AG04450 (cell line): ENCODE measurements at regions of chr5 and their contacts with region 1.

Region 1: GRCh38 chr5:39080597-39081204 is 6.5 kb upstream of the RICTOR start:
- DNase-seq: peak; percentile 47
- H3K4me3 ChIP-seq: no peak overlapping the region
- H3K27ac ChIP-seq: no peak overlapping the region
- H3K27me3 ChIP-seq: no peaks in the 10 kb centered on the region
- CTCF ChIP-seq: peak; percentile 84

Region 2: DNA sequence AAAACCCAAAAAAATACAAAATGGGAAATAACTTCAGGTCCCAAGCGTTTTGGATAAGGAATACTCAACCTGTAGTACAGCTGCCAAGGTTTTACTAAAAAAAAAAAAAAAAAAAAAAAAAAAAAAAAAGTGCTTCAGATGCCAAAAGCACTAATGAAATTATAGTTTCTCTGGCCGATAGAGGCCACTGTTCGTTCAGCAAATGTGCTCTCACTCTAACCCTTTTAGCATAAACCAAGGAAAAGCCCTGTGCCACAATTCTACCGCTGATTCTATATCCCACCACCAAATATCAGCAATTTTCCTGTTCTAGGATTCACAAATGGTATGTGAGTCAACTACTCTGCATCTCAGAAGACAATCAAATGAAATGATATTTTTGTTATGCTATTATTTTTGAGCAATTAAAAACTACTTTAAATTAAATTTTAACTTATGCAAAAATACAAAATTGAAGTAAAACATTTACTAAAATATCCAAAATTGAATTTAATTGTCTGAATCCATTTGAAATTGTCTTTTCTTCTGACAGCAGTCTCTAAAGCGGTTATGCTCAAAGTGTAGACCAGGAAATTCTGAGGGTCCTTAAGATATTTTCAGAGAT is 86.3 kb before region 1 on chr5:
- CTCF ChIA-PET with region 1: interaction called, 14 read pairs
- POLR2A ChIA-PET with region 1: no interaction called
- DNase-seq: peak; percentile 24
- H3K4me3 ChIP-seq: no peak overlapping the region
- H3K27ac ChIP-seq: no peak overlapping the region
- H3K27me3 ChIP-seq: no peaks in the 10 kb centered on the region
- CTCF ChIP-seq: peak; percentile 57

Region 3: DNA sequence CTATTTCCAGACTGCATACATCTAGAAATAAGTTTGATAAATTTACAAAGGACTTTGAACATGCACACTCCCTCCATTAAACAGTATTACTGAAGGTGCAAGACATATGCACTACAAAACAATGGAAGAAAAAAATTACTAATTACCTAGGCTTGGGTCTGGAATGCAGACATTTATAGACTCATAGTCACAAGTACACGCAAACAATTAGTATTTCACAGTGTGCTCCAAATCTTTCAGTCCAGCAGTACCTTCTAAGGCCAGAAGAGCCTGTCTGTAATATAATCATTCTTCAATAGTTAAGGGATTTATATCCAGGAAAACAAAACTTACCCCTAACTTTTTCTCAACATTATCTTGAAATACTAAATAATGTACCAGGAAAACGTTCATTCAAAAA is 17.7 kb before region 1 on chr5:
- CTCF ChIA-PET with region 1: interaction called, 14 read pairs
- POLR2A ChIA-PET with region 1: no interaction called
- DNase-seq: no peak
- H3K4me3 ChIP-seq: no peak overlapping the region
- H3K27ac ChIP-seq: no peak overlapping the region
- H3K27me3 ChIP-seq: no peaks in the 10 kb centered on the region
- CTCF ChIP-seq: no peak

Region 4: GRCh38 chr5:39100851-39101396 is 20.2 kb after region 1 on chr5:
- CTCF ChIA-PET with region 1: interaction called, 55 read pairs
- POLR2A ChIA-PET with region 1: interaction called, 3 read pairs
- DNase-seq: peak; percentile 95
- H3K4me3 ChIP-seq: peak overlapping the region; percentile 5; the same call in 1 of the 2 replicates
- H3K27ac ChIP-seq: peak overlapping the region; percentile 96
- H3K27me3 ChIP-seq: no peaks in the 10 kb centered on the region
- CTCF ChIP-seq: no peak

Region 5: DNA sequence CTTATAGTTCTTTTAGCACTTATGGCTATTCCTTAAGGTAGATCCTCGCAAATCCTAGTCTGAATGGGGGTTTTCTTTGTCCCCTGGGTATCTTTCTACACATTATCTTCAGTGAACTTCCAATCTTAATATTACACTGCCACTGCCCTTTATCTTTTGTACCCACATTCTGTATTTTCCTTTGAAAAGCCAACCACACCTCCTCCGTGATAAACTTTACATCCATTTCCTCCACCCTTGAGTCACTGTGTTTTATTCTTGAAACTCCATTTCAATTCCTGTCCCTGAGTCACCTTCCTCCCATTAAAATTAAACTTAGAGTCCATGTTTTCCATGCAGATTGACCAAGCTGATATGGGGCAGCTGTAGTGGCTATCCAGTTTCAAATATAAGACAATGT is 36.7 kb after region 1 on chr5:
- CTCF ChIA-PET with region 1: interaction called, 17 read pairs
- POLR2A ChIA-PET with region 1: no interaction called
- DNase-seq: no peak
- H3K4me3 ChIP-seq: no peak overlapping the region
- H3K27ac ChIP-seq: no peak overlapping the region
- H3K27me3 ChIP-seq: no peaks in the 10 kb centered on the region
- CTCF ChIP-seq: no peak